T-cell (primary cell): ENCODE measurements at regions of chr12 and their contacts with region 1.

Region 1: GRCh38 chr12:46365951-46366379 is 6.6 kb downstream of the SLC38A2 start:
- DNase-seq: no peak
- ATAC-seq: no peak
- H3K4me3 ChIP-seq: no peak overlapping the region
- H3K4me3 Mint-ChIP-seq: no peak overlapping the region
- H3K27ac ChIP-seq: no peak overlapping the region
- H3K27ac Mint-ChIP-seq: peak overlapping the region in 1 of 2 donors; percentile 28
- H3K4me1 ChIP-seq: peaks cover 11 to 67% of the 10 kb centered on the region in 2 experiments
- H3K4me1 Mint-ChIP-seq: peaks cover 83 to 90% (median 88%) of the 10 kb centered on the region in 3 donors
- H3K27me3 ChIP-seq: no peaks in the 10 kb centered on the region
- H3K27me3 Mint-ChIP-seq: no peaks in the 10 kb centered on the region

Region 2: GRCh38 chr12:46112364-46112763 is 253.6 kb before region 1 on chr12:
- CTCF ChIA-PET with region 1: no interaction called
- POLR2A ChIA-PET with region 1: interaction called in 1 of 2 experiments, 11 read pairs
- DNase-seq: no peak
- ATAC-seq: no peak
- H3K4me3 ChIP-seq: no peak overlapping the region
- H3K4me3 Mint-ChIP-seq: no peak overlapping the region
- H3K27ac ChIP-seq: no peak overlapping the region
- H3K27ac Mint-ChIP-seq: no peak overlapping the region
- H3K4me1 ChIP-seq: no peaks in the 10 kb centered on the region
- H3K4me1 Mint-ChIP-seq: peaks cover 0 to 6% (median 0%) of the 10 kb centered on the region in 3 donors
- H3K27me3 ChIP-seq: peaks cover 0 to 9% of the 10 kb centered on the region in 2 experiments
- H3K27me3 Mint-ChIP-seq: peaks cover 8 to 9% of the 10 kb centered on the region in 2 donors